ENCODE measurements at regions of chr3 and their contacts with region 1.

Region 1: DNA sequence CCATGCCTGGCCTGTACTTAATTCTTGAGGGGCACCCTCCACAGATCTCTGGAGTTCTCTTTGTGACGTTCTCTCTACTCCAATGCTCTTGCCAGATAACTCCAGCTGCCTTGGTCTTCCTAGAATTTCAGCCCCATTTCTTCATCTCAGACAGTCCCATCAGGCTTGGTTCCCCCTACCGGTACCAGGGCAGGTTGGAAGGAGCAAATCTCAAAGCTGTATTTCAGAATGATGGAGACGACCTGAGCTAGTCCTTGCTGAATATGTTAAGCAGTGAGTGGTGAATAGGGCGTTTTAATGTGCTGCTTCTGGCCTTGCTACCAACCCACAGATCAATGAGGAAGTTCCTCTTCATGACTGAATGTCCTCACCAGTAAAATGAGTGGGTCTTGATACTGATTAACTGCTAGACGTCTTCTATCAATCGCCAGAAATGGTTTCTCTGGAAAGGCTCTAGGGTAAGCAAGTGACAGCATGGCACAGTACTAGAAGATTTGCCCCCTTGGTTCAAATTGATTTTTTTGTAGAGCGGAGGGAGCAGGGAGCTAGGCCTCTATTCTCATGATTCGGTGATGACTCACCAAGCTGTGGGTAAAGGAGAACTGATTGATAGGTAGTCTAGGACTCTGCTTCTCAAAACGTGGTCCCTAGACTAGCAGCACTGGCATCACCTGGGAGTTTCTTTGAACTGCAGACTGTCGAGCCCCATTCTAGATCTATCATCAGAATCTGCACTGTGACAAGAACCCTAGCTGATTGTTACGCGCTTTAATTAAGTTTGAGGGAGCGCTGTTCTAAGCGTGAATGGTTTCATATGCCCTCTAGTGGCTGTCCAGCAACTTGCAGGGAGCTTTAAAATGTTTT is 67.8 kb downstream of the UBP1 start:
- DNase-seq: peak; percentile 85
- H3K4me3 Mint-ChIP-seq: no peak overlapping the region
- H3K27ac Mint-ChIP-seq: no peak overlapping the region
- H3K4me1 Mint-ChIP-seq: peaks cover 10% of the 10 kb centered on the region
- H3K27me3 Mint-ChIP-seq: no peaks in the 10 kb centered on the region
- CTCF ChIP-seq: peak; percentile 87

Region 2: GRCh38 chr3:33096093-33096868 is 276.2 kb before region 1 on chr3:
- CTCF ChIA-PET with region 1: interaction called, 16 read pairs
- POLR2A ChIA-PET with region 1: no interaction called
- intact Hi-C with region 1: no loop called
- DNase-seq: peak; percentile 36
- H3K4me3 Mint-ChIP-seq: peak overlapping the region; percentile 93
- H3K27ac Mint-ChIP-seq: peak overlapping the region; percentile 86
- H3K4me1 Mint-ChIP-seq: peaks cover 7% of the 10 kb centered on the region
- H3K27me3 Mint-ChIP-seq: no peaks in the 10 kb centered on the region
- CTCF ChIP-seq: no peak

Region 3: DNA sequence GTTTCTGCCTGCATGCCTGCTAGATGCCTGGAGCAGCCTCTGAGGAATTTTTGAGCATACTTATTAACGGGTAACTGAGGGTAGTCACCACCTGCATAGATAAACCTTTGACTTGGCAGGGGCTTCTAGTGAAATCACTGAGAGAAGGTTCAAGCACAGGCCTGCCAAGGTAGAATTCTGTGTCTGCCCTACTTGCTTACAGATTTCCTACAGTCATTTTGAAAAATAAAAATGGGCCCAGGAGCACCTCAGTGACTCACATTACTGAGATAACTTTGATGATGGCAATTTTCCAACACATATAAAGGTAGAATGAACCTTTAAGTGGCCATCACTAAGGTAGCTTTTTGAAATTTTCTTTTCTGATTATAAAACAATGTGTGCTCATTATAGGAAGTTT is 247.8 kb before region 1 on chr3:
- CTCF ChIA-PET with region 1: interaction called, 334 read pairs
- POLR2A ChIA-PET with region 1: interaction called, 9 read pairs
- intact Hi-C with region 1: no loop called
- DNase-seq: no peak
- H3K4me3 Mint-ChIP-seq: no peak overlapping the region
- H3K27ac Mint-ChIP-seq: no peak overlapping the region
- H3K4me1 Mint-ChIP-seq: peaks cover 7% of the 10 kb centered on the region
- H3K27me3 Mint-ChIP-seq: no peaks in the 10 kb centered on the region
- CTCF ChIP-seq: no peak

Region 4: GRCh38 chr3:33137691-33138090 is 234.8 kb before region 1 on chr3:
- CTCF ChIA-PET with region 1: interaction called, 334 read pairs
- POLR2A ChIA-PET with region 1: interaction called, 4 read pairs
- intact Hi-C with region 1: no loop called
- DNase-seq: no peak
- H3K4me3 Mint-ChIP-seq: no peak overlapping the region
- H3K27ac Mint-ChIP-seq: no peak overlapping the region
- H3K4me1 Mint-ChIP-seq: no peaks in the 10 kb centered on the region
- H3K27me3 Mint-ChIP-seq: no peaks in the 10 kb centered on the region
- CTCF ChIP-seq: no peak

Region 5: GRCh38 chr3:33277193-33277882 is 95.1 kb before region 1 on chr3 and contains the start of gene FBXL2:
- CTCF ChIA-PET with region 1: interaction called, 9 read pairs
- POLR2A ChIA-PET with region 1: interaction called, 13 read pairs
- intact Hi-C with region 1: loop called (anchors 1 kb)
- DNase-seq: peak; percentile 76
- H3K4me3 Mint-ChIP-seq: peak within 1 kb of the TSS; percentile 75
- H3K27ac Mint-ChIP-seq: peak within 1 kb of the TSS; percentile 85
- H3K4me1 Mint-ChIP-seq: peaks cover 11% of the 10 kb centered on the region
- H3K27me3 Mint-ChIP-seq: no peaks in the 10 kb centered on the region
- CTCF ChIP-seq: no peak
- total RNA-seq, gene FBXL2: 9.6 and 9.8 TPM in 2 replicates

Region 6: GRCh38 chr3:33385423-33385822 is 13.0 kb after region 1 on chr3:
- CTCF ChIA-PET with region 1: interaction called, 32 read pairs
- POLR2A ChIA-PET with region 1: interaction called, 5 read pairs
- intact Hi-C with region 1: no loop called
- DNase-seq: no peak
- H3K4me3 Mint-ChIP-seq: no peak overlapping the region
- H3K27ac Mint-ChIP-seq: no peak overlapping the region
- H3K4me1 Mint-ChIP-seq: no peaks in the 10 kb centered on the region
- H3K27me3 Mint-ChIP-seq: no peaks in the 10 kb centered on the region
- CTCF ChIP-seq: no peak

Measured in MCF 10A (cell line).